Activated T-helper 1 cell treated with anti-CD3 and anti-CD28 coated beads, Interleukin-12 subunit alpha, Interleukin-12 subunit beta, Interleukin-2, Interleukin-4 antibody, amounts not matched to agents 30 ng/mL and 10 ng/mL and 1 ng/mL, durations not matched to agents 14 hours and 24 hours and 36 hours (primary cell): ENCODE measurements at regions of chr1 and their contacts with region 1.

Region 1: GRCh38 chr1:171741872-171742576 is at the start of gene VAMP4:
- DNase-seq: peak; percentile 80
- H3K4me3 Mint-ChIP-seq: peak within 1 kb of the TSS; percentile 99
- H3K27ac Mint-ChIP-seq: peak within 1 kb of the TSS; percentile 100
- H3K4me1 Mint-ChIP-seq: peaks cover 56% of the 10 kb centered on the region
- H3K27me3 Mint-ChIP-seq: no peaks in the 10 kb centered on the region
- total RNA-seq, gene VAMP4: 8.8 and 10.4 TPM in 2 replicates

Region 2: GRCh38 chr1:170531758-170532657 is 1210.0 kb before region 1 on chr1 and contains the start of gene GORAB:
- intact Hi-C with region 1: loop called (anchors 5 kb)
- DNase-seq: peak; percentile 82
- H3K4me3 Mint-ChIP-seq: no peak within 1 kb of the TSS
- H3K27ac Mint-ChIP-seq: no peak within 1 kb of the TSS
- H3K4me1 Mint-ChIP-seq: peaks cover 8% of the 10 kb centered on the region
- H3K27me3 Mint-ChIP-seq: peaks cover 4% of the 10 kb centered on the region
- total RNA-seq, gene GORAB: 11.8 and 12.2 TPM in 2 replicates

Region 3: GRCh38 chr1:170967042-170967910 is 774.7 kb before region 1 on chr1:
- intact Hi-C with region 1: no loop called
- DNase-seq: no peak
- H3K4me3 Mint-ChIP-seq: no peak overlapping the region
- H3K27ac Mint-ChIP-seq: no peak overlapping the region
- H3K4me1 Mint-ChIP-seq: no peaks in the 10 kb centered on the region
- H3K27me3 Mint-ChIP-seq: peaks cover 4% of the 10 kb centered on the region

Region 4: DNA sequence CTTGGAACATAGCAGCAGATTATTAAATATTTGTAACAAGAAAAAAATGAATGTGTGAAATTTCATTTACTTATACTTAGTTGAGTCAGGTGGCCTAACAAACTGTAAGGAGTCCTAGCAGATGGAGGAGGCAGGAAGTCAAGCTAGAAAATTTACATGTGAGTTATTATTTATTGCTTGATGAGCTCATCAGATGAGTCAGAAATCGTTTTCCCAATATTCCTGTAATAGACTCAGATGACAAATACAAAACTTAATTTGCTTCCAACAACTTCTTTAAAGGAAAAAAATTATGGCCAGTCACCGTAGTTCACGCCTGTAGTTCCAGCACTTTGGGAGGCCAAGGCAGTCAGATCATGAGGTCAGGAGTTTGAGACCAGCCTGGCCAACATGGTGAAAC is 300.7 kb before region 1 on chr1:
- intact Hi-C with region 1: no loop called
- DNase-seq: no peak
- H3K4me3 Mint-ChIP-seq: no peak overlapping the region
- H3K27ac Mint-ChIP-seq: no peak overlapping the region
- H3K4me1 Mint-ChIP-seq: no peaks in the 10 kb centered on the region
- H3K27me3 Mint-ChIP-seq: peaks cover 2% of the 10 kb centered on the region

Region 5: GRCh38 chr1:171644805-171645483 is 97.1 kb before region 1 on chr1:
- intact Hi-C with region 1: loop called (anchors 1 kb)
- DNase-seq: peak; percentile 63
- H3K4me3 Mint-ChIP-seq: no peak overlapping the region
- H3K27ac Mint-ChIP-seq: no peak overlapping the region
- H3K4me1 Mint-ChIP-seq: peaks cover 10% of the 10 kb centered on the region
- H3K27me3 Mint-ChIP-seq: peaks cover 7% of the 10 kb centered on the region

Region 6: GRCh38 chr1:171781176-171781875 is 39.3 kb after region 1 on chr1 and contains the start of gene METTL13:
- intact Hi-C with region 1: loop called (anchors 1 kb)
- DNase-seq: peak; percentile 99
- H3K4me3 Mint-ChIP-seq: peak within 1 kb of the TSS; percentile 93
- H3K27ac Mint-ChIP-seq: peak within 1 kb of the TSS; percentile 88
- H3K4me1 Mint-ChIP-seq: peaks cover 57% of the 10 kb centered on the region
- H3K27me3 Mint-ChIP-seq: no peaks in the 10 kb centered on the region
- total RNA-seq, gene METTL13: 55.6 and 56.5 TPM in 2 replicates

Region 7: GRCh38 chr1:171841050-171841940 is 99.3 kb after region 1 on chr1 and contains the start of gene DNM3:
- intact Hi-C with region 1: loop called (anchors 1 kb)
- DNase-seq: peak; percentile 81
- H3K4me3 Mint-ChIP-seq: peak within 1 kb of the TSS; percentile 87
- H3K27ac Mint-ChIP-seq: peak within 1 kb of the TSS; percentile 72
- H3K4me1 Mint-ChIP-seq: peaks cover 18% of the 10 kb centered on the region
- H3K27me3 Mint-ChIP-seq: peaks cover 37% of the 10 kb centered on the region
- total RNA-seq, gene DNM3: 0.62 and 0.64 TPM in 2 replicates